ENCODE measurements at regions of chr11 and their contacts with region 1.

Region 1: DNA sequence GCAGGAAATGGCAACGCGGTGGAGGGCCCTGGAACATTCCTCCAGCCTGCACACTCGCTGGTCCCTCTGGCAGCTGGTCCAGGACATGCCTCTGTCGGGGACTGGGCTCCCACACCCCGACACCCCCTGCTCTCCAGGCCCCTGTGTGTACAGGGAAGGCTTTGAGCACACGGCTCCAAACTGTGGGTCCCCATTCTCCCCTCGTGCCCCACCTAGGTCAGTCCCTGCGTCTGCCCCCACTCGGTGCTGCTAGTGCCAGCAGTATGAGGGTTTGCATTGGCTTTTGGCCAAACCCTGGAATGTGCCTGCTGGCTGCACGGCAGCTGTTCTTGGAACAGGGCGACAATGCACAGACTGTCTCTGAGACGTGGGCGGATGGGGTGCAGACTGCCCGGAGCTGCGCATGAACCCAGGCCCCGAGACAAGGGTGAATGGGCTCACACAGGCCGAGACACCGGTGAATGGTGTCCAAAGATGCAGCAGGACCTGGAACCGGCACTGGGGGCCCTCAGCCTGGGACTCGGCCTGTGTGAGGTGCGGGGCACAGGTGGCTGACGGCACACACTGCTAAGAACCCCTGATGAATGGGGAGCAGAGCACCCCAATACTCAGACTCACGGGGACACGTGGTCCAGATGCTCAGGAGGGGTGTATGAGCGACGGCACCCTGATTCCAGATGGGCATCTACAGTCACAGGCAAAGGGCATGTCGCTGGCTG is 7.5 kb upstream of the SYT8 start:
- DNase-seq: peak; percentile 41 to 55
- ATAC-seq: peak; percentile 14 to 16; a peak in 3 of 6 replicates
- H3K4me3 ChIP-seq: no peak overlapping the region
- H3K27ac ChIP-seq: peak overlapping the region; percentile 73 to 87
- H3K4me1 ChIP-seq: peaks cover 64% of the 10 kb centered on the region
- CTCF ChIP-seq: no peak
- EP300 ChIP-seq: no peak
- POLR2A ChIP-seq: no peak
- RAD21 ChIP-seq: no peak

Region 2: GRCh38 chr11:1706634-1707400 is 120.4 kb before region 1 on chr11:
- CTCF ChIA-PET with region 1: interaction called, 93 read pairs
- POLR2A ChIA-PET with region 1: no interaction called
- DNase-seq: peak; percentile 38 to 67
- ATAC-seq: peak; percentile 77 to 97
- H3K4me3 ChIP-seq: no peak overlapping the region
- H3K27ac ChIP-seq: no peak overlapping the region
- H3K4me1 ChIP-seq: peaks cover 3% of the 10 kb centered on the region; the same call in 1 of the 3 replicates
- CTCF ChIP-seq: peak; percentile 51
- EP300 ChIP-seq: no peak
- POLR2A ChIP-seq: no peak
- RAD21 ChIP-seq: peak; percentile 74 to 82

Region 3: DNA sequence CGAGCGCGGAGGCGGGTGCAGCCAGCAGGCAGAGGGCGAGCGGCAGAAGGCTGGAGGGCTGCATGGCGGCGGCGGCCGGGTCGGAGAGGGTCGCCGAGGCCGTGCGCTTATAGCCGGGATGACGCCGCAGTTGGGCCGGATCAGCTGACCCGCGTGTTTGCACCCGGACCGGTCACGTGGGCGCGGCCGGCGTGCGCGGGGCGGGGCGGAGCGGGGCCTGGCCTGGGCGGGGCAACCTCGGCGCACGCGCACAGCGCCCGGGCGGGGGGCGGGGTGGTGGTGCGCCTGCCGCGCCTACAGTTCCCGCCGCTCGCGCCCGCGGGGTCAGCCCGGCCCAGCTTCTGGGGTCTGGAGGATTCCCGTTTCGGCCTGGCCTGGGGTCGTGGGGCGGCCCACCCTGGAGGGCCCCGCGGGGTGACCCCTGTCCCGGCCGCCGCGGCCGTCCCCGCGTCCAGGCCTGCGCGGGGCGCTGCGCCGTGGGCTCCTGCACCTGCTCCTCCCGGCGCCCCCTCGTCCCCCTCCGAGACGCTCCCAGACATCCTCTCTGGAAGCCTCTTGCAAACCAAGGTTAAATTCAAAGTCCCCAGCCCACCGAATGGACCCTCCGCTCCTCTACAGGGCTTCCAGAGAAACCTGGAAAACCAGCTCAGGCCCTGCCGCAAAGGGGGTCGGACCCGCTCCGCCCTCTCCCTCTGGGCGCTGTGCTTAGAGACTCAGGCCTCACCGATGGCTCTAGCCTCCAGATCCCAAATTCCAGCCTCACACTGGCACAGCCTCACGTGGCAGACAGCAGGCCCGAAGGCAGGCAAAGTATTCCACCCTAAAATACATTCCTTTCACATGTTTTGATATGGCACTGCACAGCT is 63.2 kb before region 1 on chr11 and contains the start of gene CTSD:
- CTCF ChIA-PET with region 1: interaction called, 14 read pairs
- POLR2A ChIA-PET with region 1: interaction called, 8 read pairs
- DNase-seq: peak; percentile 84 to 91
- ATAC-seq: peak; percentile 69 to 70
- H3K4me3 ChIP-seq: peak within 1 kb of the TSS; percentile 100
- H3K27ac ChIP-seq: peak within 1 kb of the TSS; percentile 96 to 97
- H3K4me1 ChIP-seq: peaks cover 37% of the 10 kb centered on the region
- CTCF ChIP-seq: 0 out of 3 replicates have a peak, but pooled peaks have one; percentile 20
- EP300 ChIP-seq: no peak
- POLR2A ChIP-seq: peak; percentile 35
- RAD21 ChIP-seq: peak in 1 of 2 experiments; percentile 12; a peak in 1 of 5 replicates
- polyA plus RNA-seq, gene CTSD: 74.0 and 117 TPM in 2 replicates

Region 4: DNA sequence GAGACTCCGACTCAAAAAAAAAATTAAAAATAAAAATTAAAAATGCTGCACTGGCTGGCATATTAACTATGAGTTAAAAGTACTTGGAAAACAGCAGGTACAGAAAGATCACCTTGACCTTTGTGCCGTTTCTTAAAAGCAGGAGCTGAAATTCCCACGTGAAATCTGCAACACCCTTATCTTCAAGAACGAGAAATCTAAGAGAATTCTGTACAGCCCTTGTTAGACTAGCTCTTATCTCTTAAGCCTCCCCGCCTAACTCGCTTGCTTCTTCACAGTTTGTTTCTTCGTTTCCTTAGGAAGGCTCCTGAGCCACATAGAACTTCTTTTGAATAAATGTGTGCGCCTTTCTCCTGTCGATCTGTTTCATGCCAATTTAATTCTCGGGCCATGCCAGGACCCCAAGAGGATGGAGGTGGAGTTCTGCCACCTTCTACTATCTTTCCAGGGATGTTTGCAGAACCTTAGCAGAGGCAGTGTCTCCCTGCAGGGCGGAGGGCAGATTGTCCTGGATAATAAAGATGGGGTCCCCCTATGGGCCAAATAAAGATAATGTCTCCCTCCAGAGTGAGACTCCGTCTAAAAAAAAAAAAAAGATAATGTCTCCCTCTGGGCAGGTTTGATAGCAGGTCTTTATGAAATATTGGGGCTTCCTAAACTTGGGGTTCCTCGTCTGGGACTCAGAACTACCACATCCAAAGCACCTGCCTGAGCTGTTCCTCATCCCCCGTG is 19.8 kb before region 1 on chr11:
- CTCF ChIA-PET with region 1: interaction called, 75 read pairs
- POLR2A ChIA-PET with region 1: no interaction called
- DNase-seq: peak; percentile 32 to 59
- ATAC-seq: peak; percentile 81 to 92; a peak in 5 of 6 replicates
- H3K4me3 ChIP-seq: no peak overlapping the region
- H3K27ac ChIP-seq: no peak overlapping the region
- H3K4me1 ChIP-seq: no peaks in the 10 kb centered on the region
- CTCF ChIP-seq: peak; percentile 14; the same call in 1 of the 3 replicates
- EP300 ChIP-seq: no peak
- POLR2A ChIP-seq: no peak
- RAD21 ChIP-seq: peak; percentile 25 to 44; a peak in 3 of 5 replicates

Region 5: GRCh38 chr11:1814680-1815318 is 12.5 kb before region 1 on chr11:
- CTCF ChIA-PET with region 1: interaction called, 138 read pairs
- POLR2A ChIA-PET with region 1: no interaction called
- DNase-seq: no peak
- ATAC-seq: no peak
- H3K4me3 ChIP-seq: no peak overlapping the region
- H3K27ac ChIP-seq: no peak overlapping the region
- H3K4me1 ChIP-seq: no peaks in the 10 kb centered on the region
- CTCF ChIP-seq: no peak
- EP300 ChIP-seq: no peak
- POLR2A ChIP-seq: no peak
- RAD21 ChIP-seq: no peak

Region 6: GRCh38 chr11:1837171-1838076 is 10.2 kb after region 1 on chr11:
- CTCF ChIA-PET with region 1: interaction called, 138 read pairs
- POLR2A ChIA-PET with region 1: no interaction called
- DNase-seq: peak; percentile 59 to 70
- ATAC-seq: peak; percentile 46 to 87
- H3K4me3 ChIP-seq: no peak overlapping the region
- H3K27ac ChIP-seq: peak overlapping the region in 1 of 2 experiments; percentile 73; a peak in 3 of 6 replicates
- H3K4me1 ChIP-seq: peaks cover 24% of the 10 kb centered on the region
- CTCF ChIP-seq: peak; percentile 89
- EP300 ChIP-seq: no peak
- POLR2A ChIP-seq: no peak
- RAD21 ChIP-seq: peak; percentile 93 to 97

Region 7: DNA sequence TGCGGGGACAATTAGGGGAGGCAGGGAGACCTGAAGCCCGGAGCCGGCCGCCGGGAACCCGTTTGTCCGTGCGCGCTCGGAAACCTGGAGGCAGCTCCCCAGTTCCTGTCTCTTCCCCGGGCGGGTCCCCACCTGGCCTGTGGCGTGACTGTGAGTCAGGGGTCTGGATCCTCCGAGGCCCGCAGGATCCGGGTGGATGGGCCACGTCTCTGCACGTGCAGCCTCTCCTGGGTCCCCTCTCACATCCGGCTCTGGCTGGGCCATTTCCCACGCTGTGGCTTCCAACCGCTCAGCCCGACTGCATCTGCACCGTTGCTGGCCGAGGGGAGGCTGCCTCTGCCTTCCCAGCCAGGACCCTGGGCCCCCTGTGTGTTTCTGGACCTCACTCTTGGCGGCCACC is 185.2 kb after region 1 on chr11:
- CTCF ChIA-PET with region 1: no interaction called
- POLR2A ChIA-PET with region 1: no interaction called
- DNase-seq: no peak
- ATAC-seq: no peak
- H3K4me3 ChIP-seq: no peak overlapping the region
- H3K27ac ChIP-seq: no peak overlapping the region
- H3K4me1 ChIP-seq: no peaks in the 10 kb centered on the region
- CTCF ChIP-seq: no peak
- EP300 ChIP-seq: no peak
- POLR2A ChIP-seq: no peak
- RAD21 ChIP-seq: no peak

Measured in A549 (cell line).